GM12878 (cell line): ENCODE measurements at regions of chr7 and their contacts with region 1.

Region 1: GRCh38 chr7:86391813-86392212 is 251.9 kb upstream of the GRM3 start:
- DNase-seq: no peak
- ATAC-seq: no peak
- H3K4me3 ChIP-seq: no peak overlapping the region
- H3K27ac ChIP-seq: no peak overlapping the region
- H3K4me1 ChIP-seq: no peaks in the 10 kb centered on the region
- H3K27me3 ChIP-seq: no peaks in the 10 kb centered on the region
- CTCF ChIP-seq: no peak
- EP300 ChIP-seq: no peak
- POLR2A ChIP-seq: no peak
- RAD21 ChIP-seq: no peak

Region 2: GRCh38 chr7:86411814-86412213 is 20.0 kb after region 1 on chr7:
- CTCF ChIA-PET with region 1: no interaction called
- POLR2A ChIA-PET with region 1: no interaction called
- RAD21 ChIA-PET with region 1: no interaction called
- SMC1A ChIA-PET with region 1: no interaction called
- in situ Hi-C with region 1: no loop called
- intact Hi-C with region 1: no loop called
- DNase-seq: no peak
- ATAC-seq: no peak
- H3K4me3 ChIP-seq: no peak overlapping the region
- H3K27ac ChIP-seq: no peak overlapping the region
- H3K4me1 ChIP-seq: no peaks in the 10 kb centered on the region
- H3K27me3 ChIP-seq: no peaks in the 10 kb centered on the region
- CTCF ChIP-seq: no peak
- EP300 ChIP-seq: no peak
- POLR2A ChIP-seq: no peak
- RAD21 ChIP-seq: no peak

Region 3: DNA sequence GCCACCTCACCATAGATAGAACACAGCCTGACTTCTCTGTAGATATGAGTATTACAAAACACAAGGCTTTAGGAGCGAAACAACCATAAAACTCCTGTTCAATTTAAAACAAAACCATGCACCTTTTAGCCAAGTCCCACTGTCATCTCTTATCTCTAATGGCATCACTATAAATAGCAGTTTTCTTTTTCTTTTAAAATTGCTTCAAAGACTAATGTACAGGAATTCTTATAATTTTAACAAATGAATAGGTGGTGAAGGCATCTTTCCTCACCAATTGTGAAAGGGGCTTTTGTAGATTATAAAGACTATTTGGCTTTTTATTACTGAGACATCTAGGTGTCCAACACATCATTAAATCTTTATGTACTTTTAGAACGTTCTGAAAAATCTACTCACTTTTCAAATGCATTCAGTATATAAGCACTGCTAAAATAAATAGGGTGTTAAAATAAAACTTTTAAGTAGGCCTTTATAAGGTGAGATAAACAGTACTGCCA is 46.2 kb after region 1 on chr7:
- CTCF ChIA-PET with region 1: no interaction called
- POLR2A ChIA-PET with region 1: no interaction called
- RAD21 ChIA-PET with region 1: no interaction called
- SMC1A ChIA-PET with region 1: no interaction called
- in situ Hi-C with region 1: no loop called
- intact Hi-C with region 1: loop called (anchors 5 kb)
- DNase-seq: no peak
- ATAC-seq: no peak
- H3K4me3 ChIP-seq: no peak overlapping the region
- H3K27ac ChIP-seq: no peak overlapping the region
- H3K4me1 ChIP-seq: no peaks in the 10 kb centered on the region
- H3K27me3 ChIP-seq: no peaks in the 10 kb centered on the region
- CTCF ChIP-seq: no peak
- EP300 ChIP-seq: no peak
- POLR2A ChIP-seq: no peak
- RAD21 ChIP-seq: no peak

Region 4: DNA sequence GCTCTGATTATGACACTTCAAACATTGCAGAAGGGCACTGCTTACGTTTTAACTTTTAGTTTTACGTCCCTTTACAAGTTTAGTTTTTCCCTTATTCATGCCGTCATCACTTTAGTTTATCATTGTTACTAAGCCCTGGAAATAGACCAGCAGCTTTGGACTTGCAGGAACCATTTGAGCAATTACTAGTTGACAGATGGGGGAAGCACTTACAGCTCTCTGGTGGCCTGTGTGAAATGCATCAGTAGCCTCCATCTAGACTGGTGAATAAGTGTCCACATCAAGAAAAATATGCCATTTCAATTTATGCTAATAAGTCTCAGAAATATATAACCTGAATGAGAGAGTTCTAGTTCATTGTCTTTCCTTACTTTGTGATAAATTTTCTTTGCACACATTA is 57.0 kb after region 1 on chr7:
- CTCF ChIA-PET with region 1: no interaction called
- POLR2A ChIA-PET with region 1: no interaction called
- RAD21 ChIA-PET with region 1: no interaction called
- SMC1A ChIA-PET with region 1: no interaction called
- in situ Hi-C with region 1: no loop called
- intact Hi-C with region 1: no loop called
- DNase-seq: no peak
- ATAC-seq: no peak
- H3K4me3 ChIP-seq: no peak overlapping the region
- H3K27ac ChIP-seq: no peak overlapping the region
- H3K4me1 ChIP-seq: no peaks in the 10 kb centered on the region
- H3K27me3 ChIP-seq: no peaks in the 10 kb centered on the region
- CTCF ChIP-seq: no peak
- EP300 ChIP-seq: no peak
- POLR2A ChIP-seq: no peak
- RAD21 ChIP-seq: no peak